Thyroid gland (tissue), 4 donors: ENCODE measurements at regions of chr17 and their contacts with region 1.

Region 1: DNA sequence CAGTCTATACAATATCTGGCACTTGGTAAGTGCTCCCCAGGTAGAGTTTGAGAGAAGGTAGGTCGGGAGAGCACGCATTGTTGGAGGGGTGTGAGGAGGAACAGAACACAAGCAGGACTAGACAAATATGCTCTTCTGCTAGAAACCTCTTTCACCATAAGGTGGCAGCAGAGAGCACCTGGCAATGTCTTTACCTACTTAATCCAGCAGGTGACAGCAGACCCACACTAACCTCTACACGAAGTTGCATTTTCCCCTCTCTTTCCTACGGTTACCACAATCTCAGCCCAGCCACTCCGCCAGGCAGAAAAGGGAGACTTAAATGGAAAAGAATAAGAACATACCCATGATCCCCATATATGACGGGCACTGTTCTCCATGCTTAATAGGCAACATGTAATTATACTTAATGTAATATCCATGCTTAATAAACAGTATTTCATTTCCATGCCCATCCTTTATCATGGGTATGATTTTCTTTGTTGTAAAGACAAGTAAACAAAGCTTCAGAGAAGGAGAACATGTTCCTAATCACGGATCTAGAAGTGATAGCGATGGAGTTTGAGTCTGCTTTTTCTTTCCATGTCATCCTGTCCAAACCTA is 55.1 kb upstream of the CCL2 start:
- DNase-seq: peak; percentile 76 to 78
- H3K4me3 ChIP-seq: no peak overlapping the region
- H3K27ac ChIP-seq: no peak overlapping the region
- H3K4me1 ChIP-seq: peaks cover 0 to 3% of the 10 kb centered on the region in 2 donors
- H3K27me3 ChIP-seq: no peaks in the 10 kb centered on the region
- CTCF ChIP-seq: peak; percentile 99 to 100 (median 100)
- POLR2A ChIP-seq: no peak

Region 2: GRCh38 chr17:34301986-34302385 is 102.0 kb after region 1 on chr17:
- intact Hi-C with region 1: loop called (anchors 2 kb)
- DNase-seq: no peak
- H3K4me3 ChIP-seq: no peak overlapping the region
- H3K27ac ChIP-seq: no peak overlapping the region
- H3K4me1 ChIP-seq: no peaks in the 10 kb centered on the region
- H3K27me3 ChIP-seq: no peaks in the 10 kb centered on the region
- CTCF ChIP-seq: no peak
- POLR2A ChIP-seq: no peak